Gastrocnemius medialis (tissue), 4 donors: ENCODE measurements at regions of chrX and their contacts with region 1.

Region 1: DNA sequence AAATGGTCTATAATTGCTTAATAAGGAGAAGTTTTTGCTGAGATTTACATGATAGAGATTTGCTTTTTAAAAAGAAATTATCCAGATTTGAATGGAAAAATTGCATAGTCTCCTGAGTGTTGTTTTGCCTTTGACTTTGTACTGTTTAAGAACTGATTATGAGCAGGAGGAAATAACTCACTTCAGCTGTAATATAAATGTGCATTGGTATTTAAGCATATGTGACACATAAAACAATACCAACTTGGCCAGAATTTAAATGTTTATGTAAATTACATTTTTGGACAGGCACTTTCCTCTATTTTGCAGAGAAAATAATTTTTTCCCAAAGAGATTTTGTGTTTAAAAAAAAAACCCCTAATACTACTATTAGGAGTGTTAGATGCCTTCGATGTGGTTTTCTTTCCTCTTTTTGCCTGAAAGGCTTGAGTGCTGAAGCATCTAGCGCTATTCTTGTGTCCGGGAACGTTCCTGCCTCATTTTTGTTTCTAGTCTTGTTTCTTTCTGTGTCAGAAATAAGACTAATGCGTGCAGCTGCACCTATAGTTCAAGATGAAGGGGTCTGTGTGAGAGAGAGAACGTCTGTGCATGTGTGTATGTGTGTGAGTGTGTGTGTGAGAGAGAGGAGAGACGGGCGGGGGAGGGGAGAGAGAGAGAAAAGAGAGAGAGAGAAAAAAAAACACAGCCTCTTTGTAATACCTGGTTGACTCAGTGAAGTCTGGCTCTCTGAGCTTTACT is 60.8 kb downstream of the TBL1X start:
- DNase-seq: no peak
- ATAC-seq: no peak
- H3K4me3 ChIP-seq: no peak overlapping the region
- H3K27ac ChIP-seq: no peak overlapping the region
- H3K4me1 ChIP-seq: no peaks in the 10 kb centered on the region
- H3K27me3 ChIP-seq: no peaks in the 10 kb centered on the region
- CTCF ChIP-seq: no peak
- POLR2A ChIP-seq: no peak

Region 2: GRCh38 chrX:9352694-9353411 is 172.8 kb before region 1 on chrX:
- in situ Hi-C with region 1: no loop called
- intact Hi-C with region 1: no loop called
- DNase-seq: peak; percentile 4 to 20
- ATAC-seq: peak in 1 of 2 donors; percentile 46
- H3K4me3 ChIP-seq: no peak overlapping the region
- H3K27ac ChIP-seq: no peak overlapping the region
- H3K4me1 ChIP-seq: peaks cover 0 to 6% of the 10 kb centered on the region in 2 donors
- H3K27me3 ChIP-seq: no peaks in the 10 kb centered on the region
- CTCF ChIP-seq: no peak
- POLR2A ChIP-seq: no peak

Region 3: GRCh38 chrX:9656277-9656676 is 130.6 kb after region 1 on chrX:
- in situ Hi-C with region 1: no loop called
- intact Hi-C with region 1: loop called (anchors 10 kb)
- DNase-seq: peak; percentile 13 to 41
- ATAC-seq: peak; percentile 74 to 95
- H3K4me3 ChIP-seq: no peak overlapping the region
- H3K27ac ChIP-seq: peak overlapping the region in 1 of 4 donors; percentile 10
- H3K4me1 ChIP-seq: peaks cover 0 to 3% of the 10 kb centered on the region in 2 donors
- H3K27me3 ChIP-seq: no peaks in the 10 kb centered on the region
- CTCF ChIP-seq: no peak
- POLR2A ChIP-seq: no peak

Region 4: GRCh38 chrX:9745417-9746115 is 219.9 kb after region 1 on chrX:
- in situ Hi-C with region 1: no loop called
- intact Hi-C with region 1: no loop called
- DNase-seq: no peak
- ATAC-seq: no peak
- H3K4me3 ChIP-seq: no peak overlapping the region
- H3K27ac ChIP-seq: peak overlapping the region in 1 of 4 donors; percentile 20
- H3K4me1 ChIP-seq: no peaks in the 10 kb centered on the region
- H3K27me3 ChIP-seq: no peaks in the 10 kb centered on the region
- CTCF ChIP-seq: no peak
- POLR2A ChIP-seq: no peak

Region 5: GRCh38 chrX:9873952-9874351 is 348.3 kb after region 1 on chrX:
- in situ Hi-C with region 1: no loop called
- intact Hi-C with region 1: no loop called
- DNase-seq: no peak
- ATAC-seq: no peak
- H3K4me3 ChIP-seq: no peak overlapping the region
- H3K27ac ChIP-seq: no peak overlapping the region
- H3K4me1 ChIP-seq: no peaks in the 10 kb centered on the region
- H3K27me3 ChIP-seq: no peaks in the 10 kb centered on the region
- CTCF ChIP-seq: peak in 2 of 5 experiments; percentile 36 to 41
- POLR2A ChIP-seq: no peak